HCT116 (cell line): ENCODE measurements at regions of chr12 and their contacts with region 1.

Region 1: GRCh38 chr12:132285991-132286681 is 43.3 kb downstream of the GALNT9 start:
- DNase-seq: no peak
- ATAC-seq: peak; percentile 57
- H3K4me3 ChIP-seq: peak overlapping the region; percentile 39 to 55
- H3K27ac ChIP-seq: peak overlapping the region; percentile 62
- H3K4me1 ChIP-seq: peaks cover 54 to 73% of the 10 kb centered on the region in 2 experiments
- H3K27me3 ChIP-seq: no peaks in the 10 kb centered on the region
- CTCF ChIP-seq: no peak
- POLR2A ChIP-seq: no peak
- RAD21 ChIP-seq: no peak

Region 2: GRCh38 chr12:132275110-132275531 is 11.0 kb before region 1 on chr12:
- CTCF ChIA-PET with region 1: interaction called, 12 read pairs
- POLR2A ChIA-PET with region 1: interaction called, 4 read pairs
- RAD21 ChIA-PET with region 1: no interaction called
- intact Hi-C with region 1: no loop called
- DNase-seq: peak; percentile 82
- ATAC-seq: peak; percentile 100
- H3K4me3 ChIP-seq: peak overlapping the region; percentile 39 to 62
- H3K27ac ChIP-seq: peak overlapping the region; percentile 20; the same call in 1 of the 2 replicates
- H3K4me1 ChIP-seq: peaks cover 9 to 26% of the 10 kb centered on the region in 2 experiments
- H3K27me3 ChIP-seq: no peaks in the 10 kb centered on the region
- CTCF ChIP-seq: no peak
- POLR2A ChIP-seq: no peak
- RAD21 ChIP-seq: no peak

Region 3: DNA sequence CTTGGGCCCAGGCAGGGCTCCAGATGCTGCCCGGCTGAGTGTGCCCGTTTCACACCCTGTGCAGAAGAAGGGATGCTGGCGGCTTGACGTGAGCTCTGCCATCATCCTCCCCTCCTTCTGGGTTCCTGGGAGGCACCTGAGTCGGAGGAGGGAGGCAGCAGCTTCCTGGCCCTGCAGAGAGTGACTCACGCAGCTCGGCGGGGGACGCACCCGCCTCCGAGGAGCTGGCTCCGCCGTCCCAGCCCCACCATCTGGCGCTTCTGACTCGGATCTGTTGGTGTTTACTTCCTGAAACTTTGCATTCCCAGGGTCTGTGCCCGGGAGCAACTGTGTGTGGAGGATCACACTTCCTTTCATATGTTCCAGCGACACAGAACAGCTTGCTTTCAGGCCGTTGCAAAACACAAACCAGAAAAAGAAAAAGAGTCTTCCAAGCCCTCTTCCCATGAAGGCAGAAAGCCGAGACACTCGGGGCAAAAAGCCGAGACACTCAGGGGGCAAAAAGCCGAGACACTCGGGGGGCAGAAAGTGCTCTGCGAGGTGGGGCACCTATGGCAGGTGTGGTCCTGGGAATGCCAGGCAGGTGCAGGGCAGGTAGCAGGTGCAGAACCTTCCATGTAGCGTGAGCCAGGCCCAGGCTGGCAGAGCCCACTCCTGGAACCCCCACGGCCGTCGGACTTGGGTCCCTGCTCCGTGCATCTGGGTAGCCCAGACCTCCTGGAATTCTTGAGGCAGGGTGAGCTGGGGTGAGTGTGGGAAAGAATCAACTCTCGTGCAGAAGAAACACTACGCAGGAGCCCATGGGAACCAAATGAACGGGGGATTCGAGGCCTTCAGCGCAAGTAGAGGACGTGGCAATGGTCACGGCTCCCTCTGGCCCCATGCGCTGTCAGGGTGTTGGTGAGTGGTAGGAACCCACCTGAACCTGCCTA is 70.8 kb after region 1 on chr12:
- CTCF ChIA-PET with region 1: no interaction called
- POLR2A ChIA-PET with region 1: no interaction called
- RAD21 ChIA-PET with region 1: no interaction called
- intact Hi-C with region 1: loop called (anchors 5 kb)
- DNase-seq: peak; percentile 22
- ATAC-seq: peak; percentile 98
- H3K4me3 ChIP-seq: peak overlapping the region in 1 of 2 experiments; percentile 41; a peak in 2 of 4 replicates
- H3K27ac ChIP-seq: peak overlapping the region; percentile 25; the same call in 1 of the 2 replicates
- H3K4me1 ChIP-seq: peaks cover 7 to 14% of the 10 kb centered on the region in 2 experiments; a peak in 3 of 4 replicates
- H3K27me3 ChIP-seq: no peaks in the 10 kb centered on the region
- CTCF ChIP-seq: no peak
- POLR2A ChIP-seq: no peak
- RAD21 ChIP-seq: no peak

Region 4: DNA sequence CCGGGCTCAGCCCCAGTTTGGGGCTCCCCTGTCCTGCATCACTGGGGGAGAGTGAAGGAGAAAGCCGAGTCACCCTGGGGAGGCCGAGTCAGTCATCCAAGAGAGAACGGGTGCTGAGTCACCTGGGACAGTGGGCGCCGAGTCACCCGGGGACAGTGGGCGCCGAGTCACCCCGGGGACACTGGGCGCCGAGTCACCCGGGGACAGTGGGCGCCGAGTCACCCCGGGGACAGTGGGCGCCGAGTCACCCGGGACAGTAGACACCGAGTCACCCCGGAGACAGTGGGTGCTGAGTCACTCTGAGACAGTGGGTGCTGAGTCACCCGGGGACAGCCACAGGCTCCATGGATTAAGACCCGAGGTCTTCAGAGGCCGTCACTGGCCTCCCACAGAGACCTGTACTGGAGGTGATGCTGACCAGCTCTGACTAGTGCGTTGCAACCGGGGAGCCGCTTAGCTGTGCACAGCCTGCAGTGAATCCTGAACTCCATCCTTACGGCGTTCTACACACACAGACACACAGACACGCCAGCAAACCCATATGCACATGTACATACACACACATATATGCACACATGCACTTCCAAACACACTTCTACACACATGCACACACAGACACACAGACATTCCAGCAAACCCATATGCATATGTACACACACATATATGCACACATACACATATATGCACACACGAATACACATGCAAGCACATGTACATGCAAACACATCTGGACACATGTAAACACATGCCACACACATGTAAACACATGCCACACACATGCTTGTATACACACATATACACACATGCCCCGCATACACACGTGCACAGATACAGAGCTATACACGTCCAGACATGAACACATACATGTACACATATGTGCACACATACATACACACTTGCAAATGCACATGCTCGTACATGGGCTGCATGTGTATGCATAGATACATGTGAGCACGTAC is 108.1 kb after region 1 on chr12:
- CTCF ChIA-PET with region 1: no interaction called
- POLR2A ChIA-PET with region 1: interaction called, 3 read pairs
- RAD21 ChIA-PET with region 1: no interaction called
- intact Hi-C with region 1: loop called (anchors 5 kb)
- DNase-seq: no peak
- ATAC-seq: peak; percentile 52
- H3K4me3 ChIP-seq: peak overlapping the region; percentile 17 to 49
- H3K27ac ChIP-seq: peak overlapping the region; percentile 11; the same call in 1 of the 2 replicates
- H3K4me1 ChIP-seq: peaks cover 16 to 22% of the 10 kb centered on the region in 2 experiments
- H3K27me3 ChIP-seq: no peaks in the 10 kb centered on the region
- CTCF ChIP-seq: no peak
- POLR2A ChIP-seq: no peak
- RAD21 ChIP-seq: no peak